ENCODE measurements at regions of chr2 and their contacts with region 1.

Region 1: DNA sequence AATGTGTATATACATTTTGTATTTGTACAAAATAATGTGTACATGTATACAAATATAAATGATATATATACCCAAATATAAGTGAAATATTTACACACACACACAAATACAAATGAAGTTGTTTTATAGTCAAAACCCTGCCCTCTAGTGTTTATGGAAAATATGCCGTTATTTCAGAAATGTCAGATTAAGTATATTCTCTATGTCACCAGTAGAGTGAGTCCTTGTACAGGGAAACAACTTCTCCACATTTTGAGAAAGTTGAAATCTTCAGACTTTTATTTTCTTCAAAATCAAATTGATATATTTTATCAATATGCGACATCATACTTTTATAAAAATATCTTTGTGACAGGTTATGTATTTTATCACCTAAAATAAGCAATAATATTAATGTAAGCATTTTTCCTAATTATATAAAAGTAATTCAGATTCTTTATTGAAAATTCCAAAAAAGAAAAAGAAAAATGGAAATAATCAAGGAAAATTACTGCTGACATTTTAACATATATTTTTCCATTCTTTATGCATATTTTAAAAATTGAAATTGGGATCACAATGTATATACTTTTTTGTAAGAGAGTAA is 22.4 kb downstream of the ARL6IP6 start:
- DNase-seq: no peak

Region 2: GRCh38 chr2:153197402-153198386 is 456.9 kb after region 1 on chr2:
- intact Hi-C with region 1: no loop called
- DNase-seq: peak in 1 of 10 donors; percentile 58

Region 3: DNA sequence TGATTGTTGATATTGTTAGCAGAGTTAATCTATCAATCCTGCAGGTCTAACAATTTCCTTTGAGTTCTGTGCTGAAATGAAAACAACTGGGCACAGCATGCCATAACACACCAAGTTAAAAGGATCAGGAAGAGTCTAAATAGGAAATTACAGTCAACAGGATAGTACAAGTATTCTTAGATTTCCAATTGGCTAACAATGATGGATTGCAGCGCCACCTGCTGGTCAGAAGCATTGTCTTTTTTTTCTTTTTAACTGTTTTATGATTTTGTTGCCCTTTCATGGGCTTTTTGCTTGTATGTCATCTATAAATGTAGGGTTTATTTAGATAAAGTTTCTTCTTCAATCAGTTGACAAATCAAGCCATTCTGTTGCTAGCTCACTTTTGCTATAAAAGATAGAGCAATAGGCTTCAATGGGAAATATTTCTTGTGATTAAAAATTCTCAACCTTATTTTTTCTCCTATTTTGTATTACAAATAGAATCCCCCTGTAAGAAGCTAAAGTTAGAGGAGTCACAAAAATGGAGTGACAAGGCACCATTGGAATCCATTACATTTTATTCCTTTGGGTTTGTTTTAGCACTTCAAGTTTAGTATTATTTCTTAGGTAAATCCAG is 778.5 kb after region 1 on chr2:
- intact Hi-C with region 1: loop called (anchors 10 kb)
- DNase-seq: peak in 7 of 10 donors; percentile 20 to 88 (median 66)

Measured in posterior cingulate gyrus (tissue), 11 donors.